ENCODE measurements at regions of chr22 and their contacts with region 1.

Region 1: DNA sequence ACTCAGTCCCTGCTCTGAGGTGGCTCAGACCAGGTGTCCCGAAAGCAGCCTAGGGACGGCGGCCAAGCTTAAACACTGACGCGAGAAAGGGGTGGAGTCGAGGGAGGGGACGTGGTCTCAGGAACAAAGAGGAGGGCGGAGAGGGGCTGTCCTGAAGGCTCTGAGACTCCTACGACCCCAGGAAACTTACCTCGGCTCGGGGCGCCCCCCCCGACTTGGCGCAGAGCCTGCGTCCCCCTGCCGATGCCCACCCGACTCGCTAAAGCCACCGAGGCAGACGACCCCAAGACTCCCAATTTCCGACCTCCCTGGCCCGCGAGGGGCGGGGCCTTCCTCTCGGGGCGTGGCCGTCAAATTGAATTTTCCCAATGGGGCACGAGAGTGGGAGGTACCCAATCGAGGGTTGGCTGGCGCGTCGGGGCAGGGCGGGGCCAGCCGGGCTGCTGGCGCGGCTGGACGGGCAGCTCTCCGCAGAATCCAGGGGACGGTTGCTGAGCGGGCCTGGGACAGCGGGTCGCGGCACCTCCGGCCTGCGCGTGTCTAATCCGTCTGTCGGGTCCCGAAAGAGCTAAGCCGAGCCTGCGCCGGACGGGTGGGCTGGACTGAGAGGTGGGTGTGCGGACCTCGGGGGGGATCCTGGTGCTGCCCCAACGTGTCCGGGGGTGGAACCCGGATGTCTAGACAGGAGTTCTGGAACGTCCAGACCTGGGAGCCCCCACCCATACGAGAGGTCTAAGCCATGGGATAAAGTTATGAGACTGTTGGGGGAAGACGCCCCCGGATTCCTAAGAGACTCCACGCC is at the start of gene SMTN:
- DNase-seq: peak; percentile 93
- ATAC-seq: peak; percentile 70
- H3K4me3 Mint-ChIP-seq: peak within 1 kb of the TSS; percentile 97
- H3K27ac Mint-ChIP-seq: peak within 1 kb of the TSS; percentile 80
- H3K4me1 Mint-ChIP-seq: peaks cover 25% of the 10 kb centered on the region
- H3K27me3 Mint-ChIP-seq: no peaks in the 10 kb centered on the region
- CTCF ChIP-seq: no peak
- total RNA-seq, gene SMTN: 32.0 to 36.3 TPM

Region 2: GRCh38 chr22:30763815-30764686 is 317.0 kb before region 1 on chr22:
- CTCF ChIA-PET with region 1: interaction called, 10 read pairs
- POLR2A ChIA-PET with region 1: interaction called, 6 read pairs
- intact Hi-C with region 1: loop called (anchors 10 kb)
- DNase-seq: peak; percentile 75
- ATAC-seq: peak; percentile 97
- H3K4me3 Mint-ChIP-seq: no peak overlapping the region
- H3K27ac Mint-ChIP-seq: no peak overlapping the region
- H3K4me1 Mint-ChIP-seq: peaks cover 2% of the 10 kb centered on the region
- H3K27me3 Mint-ChIP-seq: no peaks in the 10 kb centered on the region
- CTCF ChIP-seq: peak; percentile 83

Region 3: DNA sequence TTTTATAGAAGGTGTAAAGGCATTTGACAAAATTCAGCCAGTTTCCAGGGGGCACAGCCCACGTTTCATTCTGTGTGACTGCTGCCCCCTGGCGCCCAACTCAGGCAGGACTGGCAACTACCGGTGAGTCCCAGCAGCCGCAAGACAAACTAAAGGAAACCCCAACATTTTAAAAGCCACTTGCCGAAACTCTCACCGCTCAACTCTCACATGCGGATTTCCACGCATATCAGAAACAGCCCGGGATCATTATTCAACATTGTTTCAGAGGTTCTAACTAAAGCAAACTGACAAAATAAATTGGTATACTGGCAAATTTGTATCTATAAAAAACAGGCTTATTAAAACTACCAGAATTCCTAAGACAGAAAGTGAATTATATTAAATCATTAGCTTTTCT is 160.6 kb before region 1 on chr22:
- CTCF ChIA-PET with region 1: interaction called, 10 read pairs
- POLR2A ChIA-PET with region 1: interaction called, 6 read pairs
- intact Hi-C with region 1: no loop called
- DNase-seq: peak; percentile 93
- ATAC-seq: peak; percentile 79
- H3K4me3 Mint-ChIP-seq: peak overlapping the region; percentile 73
- H3K27ac Mint-ChIP-seq: peak overlapping the region; percentile 56
- H3K4me1 Mint-ChIP-seq: peaks cover 15% of the 10 kb centered on the region
- H3K27me3 Mint-ChIP-seq: no peaks in the 10 kb centered on the region
- CTCF ChIP-seq: peak; percentile 99

Region 4: GRCh38 chr22:30947816-30948454 is 133.1 kb before region 1 on chr22:
- CTCF ChIA-PET with region 1: interaction called, 44 read pairs
- POLR2A ChIA-PET with region 1: interaction called, 7 read pairs
- intact Hi-C with region 1: loop called (anchors 5 kb)
- DNase-seq: no peak
- ATAC-seq: peak; percentile 61
- H3K4me3 Mint-ChIP-seq: no peak overlapping the region
- H3K27ac Mint-ChIP-seq: no peak overlapping the region
- H3K4me1 Mint-ChIP-seq: peaks cover 44% of the 10 kb centered on the region
- H3K27me3 Mint-ChIP-seq: no peaks in the 10 kb centered on the region
- CTCF ChIP-seq: peak; percentile 38

Region 5: GRCh38 chr22:30968924-30969539 is 112.0 kb before region 1 on chr22 and contains the start of gene TUG1:
- CTCF ChIA-PET with region 1: interaction called, 38 read pairs
- POLR2A ChIA-PET with region 1: interaction called, 52 read pairs
- intact Hi-C with region 1: no loop called
- DNase-seq: peak; percentile 99
- ATAC-seq: peak; percentile 93
- H3K4me3 Mint-ChIP-seq: peak within 1 kb of the TSS; percentile 86
- H3K27ac Mint-ChIP-seq: peak within 1 kb of the TSS; percentile 97
- H3K4me1 Mint-ChIP-seq: peaks cover 54% of the 10 kb centered on the region
- H3K27me3 Mint-ChIP-seq: no peaks in the 10 kb centered on the region
- CTCF ChIP-seq: no peak
- total RNA-seq, gene TUG1: 45.2 to 45.7 TPM

Region 6: DNA sequence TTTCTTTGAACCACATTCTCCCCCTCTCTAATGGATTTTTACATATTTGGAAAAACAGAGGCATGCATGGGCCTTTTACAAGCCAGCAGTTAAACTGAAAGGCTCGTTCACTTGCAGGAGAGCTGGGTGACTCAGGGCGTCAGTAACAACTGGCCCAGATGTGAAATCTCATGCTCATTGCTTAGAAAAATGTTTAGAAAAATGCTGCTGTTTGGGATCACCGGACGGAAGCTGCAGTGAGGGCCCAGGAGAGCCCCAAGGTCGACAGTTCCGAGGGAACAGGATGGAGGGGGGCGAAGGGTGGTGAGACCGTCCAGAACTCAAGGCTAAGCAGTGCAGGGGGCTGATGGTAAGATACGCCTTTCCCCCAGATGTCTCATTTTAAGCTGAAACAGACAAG is 41.7 kb before region 1 on chr22:
- CTCF ChIA-PET with region 1: no interaction called
- POLR2A ChIA-PET with region 1: no interaction called
- intact Hi-C with region 1: no loop called
- DNase-seq: no peak
- ATAC-seq: no peak
- H3K4me3 Mint-ChIP-seq: no peak overlapping the region
- H3K27ac Mint-ChIP-seq: no peak overlapping the region
- H3K4me1 Mint-ChIP-seq: no peaks in the 10 kb centered on the region
- H3K27me3 Mint-ChIP-seq: peaks cover 2% of the 10 kb centered on the region
- CTCF ChIP-seq: no peak

Region 7: GRCh38 chr22:31096657-31097279 is 15.7 kb after region 1 on chr22:
- CTCF ChIA-PET with region 1: interaction called, 10 read pairs
- POLR2A ChIA-PET with region 1: interaction called, 5 read pairs
- intact Hi-C with region 1: no loop called
- DNase-seq: no peak
- ATAC-seq: no peak
- H3K4me3 Mint-ChIP-seq: no peak overlapping the region
- H3K27ac Mint-ChIP-seq: no peak overlapping the region
- H3K4me1 Mint-ChIP-seq: no peaks in the 10 kb centered on the region
- H3K27me3 Mint-ChIP-seq: no peaks in the 10 kb centered on the region
- CTCF ChIP-seq: no peak

Region 8: DNA sequence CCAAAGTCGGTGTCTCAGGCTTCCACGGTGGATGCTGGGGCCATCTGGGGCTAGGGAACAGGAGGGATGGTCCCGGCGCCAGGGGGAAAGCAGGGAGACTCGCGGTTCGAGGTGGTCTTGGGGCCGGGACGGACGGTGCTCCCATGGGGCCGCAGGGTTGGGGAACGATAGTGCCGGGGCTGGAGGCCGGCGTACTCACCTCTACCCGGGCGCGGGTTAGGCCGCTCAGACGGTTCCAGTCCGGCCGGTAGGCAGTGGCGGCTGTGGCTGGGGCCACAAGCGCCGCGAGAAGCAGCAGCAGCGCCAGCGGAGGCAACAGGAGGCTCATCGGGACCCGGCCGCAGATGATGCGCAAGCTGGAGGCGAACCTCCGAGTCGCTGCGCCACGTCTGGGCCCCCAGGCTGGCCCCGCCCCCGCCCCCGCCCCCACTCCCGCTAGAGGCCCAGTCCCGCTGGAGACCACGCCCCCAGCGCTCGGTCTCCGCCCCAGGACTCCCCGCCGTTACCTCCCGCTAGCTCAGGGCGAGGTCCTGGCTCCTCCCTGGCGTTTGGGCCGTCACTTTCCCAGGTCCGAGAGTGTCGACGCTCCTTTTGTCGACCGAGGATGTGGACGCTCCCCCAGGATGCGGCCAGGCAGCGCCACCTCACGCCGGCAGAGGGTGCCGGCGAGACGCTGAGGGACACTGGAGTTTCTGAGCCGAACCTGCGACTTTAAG is 26.3 kb after region 1 on chr22 and contains the start of gene SELENOM:
- CTCF ChIA-PET with region 1: interaction called, 10 read pairs
- POLR2A ChIA-PET with region 1: interaction called, 12 read pairs
- intact Hi-C with region 1: no loop called
- DNase-seq: peak; percentile 89
- ATAC-seq: peak; percentile 95
- H3K4me3 Mint-ChIP-seq: peak within 1 kb of the TSS; percentile 78
- H3K27ac Mint-ChIP-seq: peak within 1 kb of the TSS; percentile 80
- H3K4me1 Mint-ChIP-seq: peaks cover 18% of the 10 kb centered on the region
- H3K27me3 Mint-ChIP-seq: no peaks in the 10 kb centered on the region
- CTCF ChIP-seq: peak; percentile 83
- total RNA-seq, gene SELENOM: 3.6 to 5.8 TPM